Activated CD8-positive, alpha-beta T cell treated with anti-CD3 and anti-CD28 coated beads for 36 hours (primary cell): ENCODE measurements at regions of chr10 and their contacts with region 1.

Region 1: DNA sequence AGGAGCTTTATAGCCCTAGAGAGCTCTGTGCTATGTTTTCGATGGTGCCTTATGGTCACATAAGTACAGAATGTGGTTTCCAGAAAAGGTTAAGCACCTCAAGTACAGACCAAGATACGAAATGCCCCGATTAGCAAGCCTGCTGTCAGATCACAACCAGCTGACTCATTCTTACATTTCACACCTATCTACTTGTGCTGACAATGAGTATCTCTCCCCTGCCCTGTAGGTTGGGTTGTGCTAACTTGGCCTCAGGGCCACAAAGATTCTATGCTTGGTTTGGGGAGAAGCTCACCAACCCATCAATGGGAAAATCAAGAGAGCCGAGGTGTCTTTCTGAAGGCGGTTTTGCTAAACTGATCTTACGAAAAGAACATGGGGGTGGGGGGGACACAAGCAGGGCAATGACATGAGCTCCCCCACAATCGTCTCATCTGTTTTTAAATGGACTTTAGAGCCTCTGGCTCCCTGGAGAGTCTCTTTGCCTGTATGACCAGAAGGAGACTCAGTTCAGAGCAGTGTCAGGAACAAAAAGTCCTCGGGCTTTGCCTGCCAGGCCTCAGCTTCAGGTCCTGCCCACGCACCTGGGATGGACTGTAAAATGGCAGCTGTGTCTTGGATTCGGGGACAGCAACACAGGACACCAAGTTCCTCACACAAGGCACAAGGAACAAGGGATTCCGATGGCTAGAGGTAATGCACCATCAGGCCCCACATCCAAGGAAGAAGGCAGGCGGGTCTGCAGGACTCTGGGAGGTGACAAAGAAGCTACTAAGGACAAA is 55.1 kb downstream of the FAM53B start:
- DNase-seq: peak; percentile 87
- ATAC-seq: peak; percentile 91
- H3K4me3 Mint-ChIP-seq: no peak overlapping the region
- H3K27ac Mint-ChIP-seq: peak overlapping the region; percentile 83
- H3K4me1 Mint-ChIP-seq: peaks cover 79% of the 10 kb centered on the region
- H3K27me3 Mint-ChIP-seq: no peaks in the 10 kb centered on the region
- CTCF ChIP-seq: no peak

Region 2: DNA sequence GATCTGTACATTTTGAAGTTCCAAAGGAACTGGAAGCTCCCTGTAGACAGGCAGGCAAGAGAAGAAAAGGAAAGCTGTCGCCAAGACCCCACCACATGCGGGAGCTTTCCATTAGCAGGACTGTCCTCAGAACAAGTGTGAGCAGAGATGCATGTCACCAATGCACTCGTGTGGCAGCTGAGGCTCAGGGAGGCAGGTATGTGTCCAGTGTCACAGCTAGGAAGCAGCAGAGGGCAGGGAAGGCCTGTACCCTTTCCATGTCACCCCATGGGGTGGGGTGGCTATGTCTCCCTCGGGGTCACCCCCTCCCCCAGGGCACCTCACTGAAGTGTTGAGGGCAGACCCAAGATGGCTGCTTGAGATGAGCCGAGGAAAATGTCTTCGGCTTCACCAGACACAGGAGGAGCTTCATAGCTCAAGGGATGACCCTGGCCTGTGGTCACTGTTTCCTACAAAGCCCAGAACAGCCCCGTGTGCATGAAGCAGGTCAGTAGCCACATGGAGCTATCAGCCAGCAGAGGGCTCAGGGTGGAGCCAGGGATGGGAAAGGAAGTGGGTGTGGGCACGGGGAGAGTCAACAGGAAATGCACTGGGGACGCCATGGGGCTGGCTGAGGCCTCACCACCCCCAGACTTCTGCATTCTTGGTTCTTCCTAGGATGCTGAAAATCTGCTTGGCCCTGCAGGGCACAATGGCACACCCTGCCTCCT is 41.5 kb before region 1 on chr10:
- CTCF ChIA-PET with region 1: interaction called, 11 read pairs
- POLR2A ChIA-PET with region 1: interaction called, 29 read pairs
- intact Hi-C with region 1: loop called (anchors 5 kb)
- DNase-seq: peak; percentile 83
- ATAC-seq: peak; percentile 70
- H3K4me3 Mint-ChIP-seq: peak overlapping the region; percentile 33
- H3K27ac Mint-ChIP-seq: peak overlapping the region; percentile 88
- H3K4me1 Mint-ChIP-seq: peaks cover 81% of the 10 kb centered on the region
- H3K27me3 Mint-ChIP-seq: no peaks in the 10 kb centered on the region
- CTCF ChIP-seq: peak; percentile 31

Region 3: DNA sequence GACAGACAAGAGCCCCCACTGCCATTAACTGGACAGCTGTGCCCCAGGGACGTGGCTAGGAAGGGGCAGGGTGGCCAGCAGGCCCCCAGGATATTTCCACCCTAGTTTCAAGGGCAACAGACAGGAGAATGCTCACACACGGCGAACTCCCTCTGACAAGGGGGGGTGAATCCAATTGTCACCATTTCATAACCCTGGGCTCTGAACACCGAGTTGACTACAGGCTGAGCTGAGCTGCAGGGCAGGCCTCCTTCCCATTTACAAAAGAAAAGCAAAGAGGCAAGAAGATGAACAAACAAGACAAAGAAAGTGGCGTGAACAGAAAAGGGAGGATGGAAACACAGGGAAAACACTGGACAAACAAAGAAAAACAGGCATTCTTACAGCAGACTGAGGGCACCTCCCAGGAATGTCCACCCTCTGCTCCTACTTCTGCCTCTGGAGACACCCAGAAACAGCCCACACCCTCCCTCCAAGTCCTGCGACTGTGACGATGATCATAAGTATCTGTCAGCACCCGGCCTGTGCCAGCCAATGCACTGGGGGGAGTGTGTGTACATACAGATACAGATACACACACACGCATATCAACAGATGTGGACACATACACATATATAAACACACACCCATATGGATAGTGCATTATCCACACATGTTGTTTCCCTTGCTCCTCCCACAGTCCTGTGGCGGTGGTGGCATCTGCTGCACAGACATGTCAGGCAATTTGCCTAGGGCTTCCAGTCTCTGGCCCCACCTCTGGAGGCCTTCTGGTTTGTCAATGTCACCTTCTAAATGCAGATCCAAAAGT is 11.1 kb before region 1 on chr10:
- CTCF ChIA-PET with region 1: interaction called, 14 read pairs
- POLR2A ChIA-PET with region 1: interaction called, 13 read pairs
- intact Hi-C with region 1: no loop called
- DNase-seq: no peak
- ATAC-seq: peak; percentile 31
- H3K4me3 Mint-ChIP-seq: no peak overlapping the region
- H3K27ac Mint-ChIP-seq: peak overlapping the region; percentile 74
- H3K4me1 Mint-ChIP-seq: peaks cover 61% of the 10 kb centered on the region
- H3K27me3 Mint-ChIP-seq: no peaks in the 10 kb centered on the region
- CTCF ChIP-seq: no peak

Region 4: DNA sequence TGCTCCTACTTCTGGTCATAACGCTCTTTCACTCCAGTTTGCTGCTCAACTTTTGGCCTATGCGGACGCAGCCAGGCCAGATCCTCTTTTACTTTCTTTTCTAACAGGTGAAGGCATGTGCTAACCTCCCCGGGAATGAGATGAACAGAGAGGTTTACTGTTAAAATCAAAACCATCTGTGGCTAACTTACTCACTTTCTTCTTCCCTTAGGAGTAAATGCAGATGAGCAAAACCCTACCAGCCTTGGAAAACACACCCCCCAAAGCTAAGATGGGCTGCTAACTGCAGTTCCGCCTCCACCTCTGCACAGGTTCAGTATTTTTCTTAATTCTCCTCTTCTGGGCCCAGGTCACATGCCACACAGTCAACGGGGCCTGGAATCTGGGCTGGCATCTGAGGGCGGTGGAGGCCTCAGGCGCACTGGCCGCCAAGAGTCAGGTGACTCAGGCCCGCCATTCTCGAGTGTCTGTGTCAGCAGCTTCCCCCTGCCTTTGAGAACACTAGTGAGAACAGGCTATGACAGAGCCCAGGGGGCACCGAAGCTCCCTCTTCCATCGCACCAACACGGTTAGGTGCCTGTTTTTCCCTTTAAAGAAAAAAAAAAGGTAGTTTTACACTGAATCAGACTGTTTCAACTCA is 44.0 kb after region 1 on chr10:
- CTCF ChIA-PET with region 1: interaction called, 15 read pairs
- POLR2A ChIA-PET with region 1: interaction called, 15 read pairs
- intact Hi-C with region 1: no loop called
- DNase-seq: peak; percentile 79
- ATAC-seq: peak; percentile 56
- H3K4me3 Mint-ChIP-seq: peak overlapping the region; percentile 61
- H3K27ac Mint-ChIP-seq: peak overlapping the region; percentile 87
- H3K4me1 Mint-ChIP-seq: peaks cover 91% of the 10 kb centered on the region
- H3K27me3 Mint-ChIP-seq: no peaks in the 10 kb centered on the region
- CTCF ChIP-seq: no peak

Region 5: DNA sequence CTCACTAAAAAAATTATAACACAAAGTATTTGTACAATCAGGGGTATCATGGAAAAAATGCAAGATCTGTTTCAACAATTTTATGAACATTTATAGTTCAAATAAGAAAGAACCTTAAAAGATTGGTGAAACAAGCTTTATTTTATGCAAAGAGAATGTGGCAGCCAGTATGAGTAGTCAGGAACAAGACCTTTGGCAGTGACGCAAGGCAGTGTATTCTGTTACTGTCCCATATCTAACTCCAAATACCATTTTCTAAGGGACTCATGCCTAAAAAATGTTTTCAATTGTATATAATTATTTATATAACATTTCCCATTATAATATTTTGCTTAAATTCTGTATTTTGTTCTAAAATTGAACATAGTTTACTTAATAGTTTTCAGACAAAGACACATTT is 74.2 kb after region 1 on chr10:
- CTCF ChIA-PET with region 1: no interaction called
- POLR2A ChIA-PET with region 1: no interaction called
- intact Hi-C with region 1: no loop called
- DNase-seq: no peak
- ATAC-seq: no peak
- H3K4me3 Mint-ChIP-seq: no peak overlapping the region
- H3K27ac Mint-ChIP-seq: no peak overlapping the region
- H3K4me1 Mint-ChIP-seq: no peaks in the 10 kb centered on the region
- H3K27me3 Mint-ChIP-seq: no peaks in the 10 kb centered on the region
- CTCF ChIP-seq: no peak

Region 6: GRCh38 chr10:124837687-124838086 is 148.6 kb after region 1 on chr10:
- CTCF ChIA-PET with region 1: no interaction called
- POLR2A ChIA-PET with region 1: no interaction called
- intact Hi-C with region 1: no loop called
- DNase-seq: no peak
- ATAC-seq: no peak
- H3K4me3 Mint-ChIP-seq: no peak overlapping the region
- H3K27ac Mint-ChIP-seq: no peak overlapping the region
- H3K4me1 Mint-ChIP-seq: no peaks in the 10 kb centered on the region
- H3K27me3 Mint-ChIP-seq: no peaks in the 10 kb centered on the region
- CTCF ChIP-seq: no peak

Region 7: GRCh38 chr10:124849111-124849773 is 160.2 kb after region 1 on chr10:
- CTCF ChIA-PET with region 1: no interaction called
- POLR2A ChIA-PET with region 1: no interaction called
- intact Hi-C with region 1: no loop called
- DNase-seq: no peak
- ATAC-seq: no peak
- H3K4me3 Mint-ChIP-seq: no peak overlapping the region
- H3K27ac Mint-ChIP-seq: no peak overlapping the region
- H3K4me1 Mint-ChIP-seq: no peaks in the 10 kb centered on the region
- H3K27me3 Mint-ChIP-seq: no peaks in the 10 kb centered on the region
- CTCF ChIP-seq: no peak

Region 8: GRCh38 chr10:124957409-124957947 is 268.4 kb after region 1 on chr10:
- CTCF ChIA-PET with region 1: no interaction called
- POLR2A ChIA-PET with region 1: no interaction called
- intact Hi-C with region 1: no loop called
- DNase-seq: no peak
- ATAC-seq: no peak
- H3K4me3 Mint-ChIP-seq: no peak overlapping the region
- H3K27ac Mint-ChIP-seq: no peak overlapping the region
- H3K4me1 Mint-ChIP-seq: peaks cover 60% of the 10 kb centered on the region
- H3K27me3 Mint-ChIP-seq: no peaks in the 10 kb centered on the region
- CTCF ChIP-seq: no peak